ENCODE measurements at regions of chr5 and their contacts with region 1.

Region 1: DNA sequence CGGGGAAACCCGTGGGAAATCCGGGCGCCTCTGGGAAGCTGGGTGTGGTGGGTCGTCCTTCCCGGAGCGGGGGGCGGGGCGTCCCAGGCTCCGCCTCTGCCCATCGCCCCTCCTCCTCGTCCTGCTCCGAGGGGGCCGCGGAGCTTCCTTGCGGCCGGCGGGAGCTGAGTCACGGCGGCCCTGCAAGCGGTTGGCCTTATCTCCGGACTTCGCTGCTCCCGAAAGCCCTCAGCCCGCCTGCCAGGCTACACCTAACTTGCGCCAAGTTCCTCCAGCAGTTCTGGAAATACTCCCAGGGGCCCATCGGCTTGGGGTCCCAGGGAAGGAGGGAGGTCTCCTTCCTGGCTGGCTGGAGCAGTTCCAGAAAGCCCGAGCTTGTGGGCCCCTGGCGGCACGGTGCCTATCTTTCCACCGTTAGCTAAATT is 54.1 kb upstream of the CDKN2AIPNL start:
- DNase-seq: peak; percentile 91 to 93 (median 92)
- ATAC-seq: peak; percentile 81 to 88 (median 85)
- H3K4me3 ChIP-seq: peak overlapping the region; percentile 42 to 78 (median 61)
- H3K27ac ChIP-seq: peak overlapping the region; percentile 95 to 99 (median 96)
- H3K4me1 ChIP-seq: peaks cover 0 to 24% (median 14%) of the 10 kb centered on the region in 4 donors
- H3K27me3 ChIP-seq: no peaks in the 10 kb centered on the region
- CTCF ChIP-seq: no peak
- POLR2A ChIP-seq: peak; percentile 92

Region 2: GRCh38 chr5:134227259-134227658 is 238.6 kb before region 1 on chr5:
- intact Hi-C with region 1: no loop called
- DNase-seq: no peak
- ATAC-seq: no peak
- H3K4me3 ChIP-seq: peak overlapping the region in 2 of 3 donors; percentile 88 to 98
- H3K27ac ChIP-seq: peak overlapping the region in 1 of 3 donors; percentile 99
- H3K4me1 ChIP-seq: peaks cover 0 to 25% (median 12%) of the 10 kb centered on the region in 4 donors
- H3K27me3 ChIP-seq: no peaks in the 10 kb centered on the region
- CTCF ChIP-seq: no peak
- POLR2A ChIP-seq: no peak

Region 3: GRCh38 chr5:134374232-134374631 is 91.6 kb before region 1 on chr5:
- intact Hi-C with region 1: no loop called
- DNase-seq: no peak
- ATAC-seq: no peak
- H3K4me3 ChIP-seq: no peak overlapping the region
- H3K27ac ChIP-seq: no peak overlapping the region
- H3K4me1 ChIP-seq: peaks cover 0 to 4% (median 0%) of the 10 kb centered on the region in 4 donors
- H3K27me3 ChIP-seq: no peaks in the 10 kb centered on the region
- CTCF ChIP-seq: peak in 2 of 4 donors; percentile 8 to 18
- POLR2A ChIP-seq: no peak

Region 4: DNA sequence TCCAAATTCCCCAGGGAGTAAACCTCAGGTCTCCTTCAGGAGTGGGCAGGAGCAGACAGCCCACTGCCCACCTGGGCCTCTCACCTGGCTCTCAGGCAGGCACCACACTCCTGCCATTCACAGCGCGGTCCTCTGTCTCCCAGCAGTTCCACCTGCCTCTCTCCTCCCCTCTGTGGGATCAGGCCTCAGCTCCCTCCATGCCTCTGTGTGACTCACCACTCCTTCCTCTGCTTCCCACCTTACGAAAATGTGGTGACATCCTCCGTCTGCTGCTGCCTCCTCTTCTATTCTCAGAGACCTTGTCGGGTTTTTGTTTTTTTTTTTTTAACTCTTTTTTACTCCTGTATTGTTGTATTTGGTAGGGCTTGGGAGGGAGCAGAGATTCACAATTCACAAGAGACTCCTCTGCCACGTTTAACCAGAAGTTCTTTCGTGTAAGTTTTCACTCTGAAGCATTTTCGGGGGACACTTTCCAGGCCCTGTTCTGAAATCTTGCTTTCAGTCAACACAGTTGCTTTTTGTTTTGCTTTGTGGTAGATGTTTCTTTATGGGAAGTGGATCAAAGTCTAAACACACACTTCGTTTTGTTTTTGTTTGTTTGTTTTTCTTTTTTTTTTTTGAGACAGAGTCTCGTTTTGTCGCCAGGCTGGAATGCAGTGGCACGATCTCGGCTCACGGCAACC is 33.0 kb before region 1 on chr5:
- intact Hi-C with region 1: loop called in 1 of 2 experiments (anchors 5 kb)
- DNase-seq: no peak
- ATAC-seq: peak; percentile 8 to 60 (median 35)
- H3K4me3 ChIP-seq: no peak overlapping the region
- H3K27ac ChIP-seq: peak overlapping the region in 2 of 3 donors; percentile 30 to 70
- H3K4me1 ChIP-seq: peaks cover 0 to 17% (median 7%) of the 10 kb centered on the region in 4 donors
- H3K27me3 ChIP-seq: no peaks in the 10 kb centered on the region
- CTCF ChIP-seq: no peak
- POLR2A ChIP-seq: no peak